ENCODE measurements at regions of chr18 and their contacts with region 1.

Region 1: GRCh38 chr18:70431203-70431624 is 142.4 kb downstream of the SOCS6 start:
- DNase-seq: no peak
- ATAC-seq: no peak
- H3K4me3 ChIP-seq: no peak overlapping the region
- H3K27ac ChIP-seq: no peak overlapping the region
- H3K4me1 ChIP-seq: peaks cover 4% of the 10 kb centered on the region
- H3K27me3 ChIP-seq: no peaks in the 10 kb centered on the region
- CTCF ChIP-seq: no peak

Region 2: DNA sequence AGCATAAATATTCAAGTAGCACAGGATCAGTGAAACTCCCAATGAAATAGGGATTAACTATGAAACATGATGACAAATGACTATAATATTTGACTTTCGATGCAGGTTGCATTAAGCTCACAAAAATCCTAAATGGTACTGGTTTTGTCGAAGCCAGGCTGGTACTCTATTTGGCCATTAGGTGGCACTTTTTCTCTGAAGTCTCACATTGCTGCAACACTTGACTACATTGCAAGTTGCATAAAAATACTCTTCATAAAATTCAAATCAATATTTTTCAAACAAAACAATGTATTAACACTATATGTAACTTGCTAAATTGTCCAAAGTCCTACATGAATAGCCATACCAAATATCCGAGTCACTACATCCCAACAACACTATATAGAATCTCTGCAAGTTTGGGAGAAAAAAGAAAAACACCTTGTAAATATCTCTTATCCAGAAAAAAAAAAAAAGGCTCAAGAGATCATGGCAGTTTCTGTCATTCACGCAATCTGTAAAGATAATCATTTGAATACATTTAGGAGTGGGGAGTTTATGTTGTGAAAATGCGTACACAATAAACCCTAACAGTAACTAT is 235.3 kb before region 1 on chr18:
- intact Hi-C with region 1: loop called (anchors 1 to 2 kb)
- DNase-seq: no peak
- ATAC-seq: peak in 3 of 4 donors; percentile 40 to 83 (median 63)
- H3K4me3 ChIP-seq: no peak overlapping the region
- H3K27ac ChIP-seq: no peak overlapping the region
- H3K4me1 ChIP-seq: no peaks in the 10 kb centered on the region
- H3K27me3 ChIP-seq: no peaks in the 10 kb centered on the region
- CTCF ChIP-seq: peak; percentile 84

Region 3: GRCh38 chr18:70205421-70206397 is 225.5 kb before region 1 on chr18 and contains the start of gene RTTN:
- intact Hi-C with region 1: loop called in 1 of 2 experiments (anchors 2 kb)
- DNase-seq: peak; percentile 94 to 97
- ATAC-seq: peak; percentile 99 to 100 (median 100)
- H3K4me3 ChIP-seq: peak within 1 kb of the TSS; percentile 90
- H3K27ac ChIP-seq: peak within 1 kb of the TSS; percentile 99
- H3K4me1 ChIP-seq: peaks cover 8% of the 10 kb centered on the region
- H3K27me3 ChIP-seq: no peaks in the 10 kb centered on the region
- CTCF ChIP-seq: no peak
- total RNA-seq, gene RTTN: 3.9 to 7.1 (median 4.5) TPM

Region 4: GRCh38 chr18:70380915-70381896 is 50.0 kb before region 1 on chr18:
- intact Hi-C with region 1: no loop called
- DNase-seq: no peak
- ATAC-seq: no peak
- H3K4me3 ChIP-seq: no peak overlapping the region
- H3K27ac ChIP-seq: no peak overlapping the region
- H3K4me1 ChIP-seq: no peaks in the 10 kb centered on the region
- H3K27me3 ChIP-seq: no peaks in the 10 kb centered on the region
- CTCF ChIP-seq: no peak

Measured in psoas muscle (tissue), 8 donors.